Activated CD4-positive, alpha-beta T cell treated with anti-CD3 and anti-CD28 coated beads, Interleukin-2, amount 10 ng/mL, durations not matched to agents 24 days and 14 days (primary cell): ENCODE measurements at regions of chr3 and their contacts with region 1.

Region 1: DNA sequence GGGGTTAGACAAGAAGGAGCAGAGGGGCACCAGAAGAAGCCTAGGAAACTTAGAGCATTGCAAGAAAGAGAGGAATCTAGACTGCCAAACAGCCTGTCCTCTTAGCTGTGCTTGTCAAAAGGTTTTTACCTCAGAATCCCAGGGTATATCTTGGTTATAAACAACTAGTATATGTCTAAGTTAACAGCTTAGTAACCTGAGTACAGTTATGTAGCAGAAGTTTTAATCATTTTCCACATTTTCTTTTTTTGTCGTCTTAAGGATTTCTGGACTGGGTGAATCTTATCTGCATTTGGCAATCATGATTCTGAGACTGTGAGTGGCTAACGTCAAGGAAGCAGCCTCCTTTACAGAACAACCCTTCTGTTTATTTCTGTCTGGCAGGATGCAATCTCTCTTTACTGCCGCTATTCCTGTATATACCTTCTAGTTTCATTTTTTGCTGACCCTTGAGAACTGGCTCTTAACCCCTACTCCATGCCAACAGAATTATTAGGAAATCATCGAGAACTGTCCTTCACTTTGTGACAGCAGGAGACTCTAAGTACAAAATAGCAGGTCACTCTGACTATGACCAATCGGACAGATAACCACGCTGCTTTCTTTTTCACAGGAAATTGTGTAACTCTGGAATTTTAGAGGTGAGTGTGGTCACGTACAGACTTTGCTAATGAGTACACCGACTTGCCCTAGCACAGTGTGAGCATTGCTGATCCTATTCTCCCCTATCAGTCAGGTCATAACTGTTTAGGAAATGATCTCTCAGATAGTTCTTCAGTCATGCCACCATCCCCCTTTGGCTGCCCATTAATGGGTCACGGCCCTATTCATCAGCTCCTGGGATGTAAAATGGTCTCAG is 3.3 kb upstream of the CP start:
- DNase-seq: peak; percentile 84
- H3K4me3 Mint-ChIP-seq: peak overlapping the region; percentile 77
- H3K27ac Mint-ChIP-seq: peak overlapping the region; percentile 92
- H3K4me1 Mint-ChIP-seq: peaks cover 31% of the 10 kb centered on the region
- H3K27me3 Mint-ChIP-seq: peaks cover 4% of the 10 kb centered on the region

Region 2: GRCh38 chr3:149163066-149163465 is 61.9 kb before region 1 on chr3:
- intact Hi-C with region 1: no loop called
- DNase-seq: no peak
- H3K4me3 Mint-ChIP-seq: no peak overlapping the region
- H3K27ac Mint-ChIP-seq: no peak overlapping the region
- H3K4me1 Mint-ChIP-seq: no peaks in the 10 kb centered on the region
- H3K27me3 Mint-ChIP-seq: no peaks in the 10 kb centered on the region

Region 3: GRCh38 chr3:149174901-149175300 is 50.1 kb before region 1 on chr3:
- intact Hi-C with region 1: loop called (anchors 2 kb)
- DNase-seq: peak; percentile 62
- H3K4me3 Mint-ChIP-seq: no peak overlapping the region
- H3K27ac Mint-ChIP-seq: no peak overlapping the region
- H3K4me1 Mint-ChIP-seq: peaks cover 9% of the 10 kb centered on the region
- H3K27me3 Mint-ChIP-seq: no peaks in the 10 kb centered on the region

Region 4: GRCh38 chr3:149203758-149204157 is 21.2 kb before region 1 on chr3:
- intact Hi-C with region 1: loop called (anchors 2 kb)
- DNase-seq: peak; percentile 66
- H3K4me3 Mint-ChIP-seq: peak overlapping the region; percentile 2
- H3K27ac Mint-ChIP-seq: no peak overlapping the region
- H3K4me1 Mint-ChIP-seq: peaks cover 18% of the 10 kb centered on the region
- H3K27me3 Mint-ChIP-seq: peaks cover 54% of the 10 kb centered on the region

Region 5: GRCh38 chr3:149245738-149246451 is 20.9 kb after region 1 on chr3:
- intact Hi-C with region 1: loop called (anchors 1 kb)
- DNase-seq: peak; percentile 58
- H3K4me3 Mint-ChIP-seq: peak overlapping the region; percentile 55
- H3K27ac Mint-ChIP-seq: peak overlapping the region; percentile 21
- H3K4me1 Mint-ChIP-seq: peaks cover 43% of the 10 kb centered on the region
- H3K27me3 Mint-ChIP-seq: peaks cover 4% of the 10 kb centered on the region